ENCODE measurements at regions of chr1 and their contacts with region 1.

Region 1: DNA sequence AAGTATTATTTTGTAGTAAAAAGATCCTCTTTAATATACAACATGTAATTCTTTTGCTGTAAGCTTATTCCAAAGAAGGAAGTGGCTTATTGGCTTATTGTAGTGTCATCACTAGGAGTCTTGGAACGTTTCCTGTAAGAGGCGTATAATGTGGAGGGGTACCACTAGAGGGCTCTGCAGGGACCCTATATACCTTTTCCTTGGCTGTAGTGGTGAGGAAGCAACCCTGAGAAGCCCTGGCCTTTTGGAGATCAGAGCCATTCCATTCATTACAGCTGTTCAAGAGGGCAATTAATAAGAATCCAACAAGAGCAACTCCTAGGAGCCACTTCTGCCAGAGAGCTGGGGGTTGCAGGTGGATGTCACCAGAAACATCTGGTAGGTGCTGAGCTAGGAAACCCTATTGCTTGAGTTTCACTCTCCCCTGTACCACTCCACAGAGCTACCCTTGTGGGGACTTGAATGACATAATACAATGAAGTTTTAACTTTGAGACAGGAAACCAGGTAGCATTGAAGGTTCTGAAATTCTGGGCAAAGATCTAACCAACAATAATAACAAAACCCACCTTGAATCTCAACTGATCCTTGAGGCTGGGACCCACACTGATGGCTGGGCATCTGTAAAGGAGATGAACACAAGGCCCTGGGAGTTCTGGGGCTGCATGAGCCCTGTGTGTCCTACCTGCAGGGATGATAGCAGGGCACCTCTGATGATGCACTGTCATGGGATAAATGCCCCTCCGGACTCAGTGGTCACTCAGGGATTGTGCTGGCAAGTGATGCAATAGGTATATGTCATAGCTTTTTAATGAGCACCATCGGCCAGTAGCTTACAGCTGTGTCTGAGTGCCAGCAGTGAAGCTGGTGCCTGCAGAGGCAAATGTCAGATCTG is 160.2 kb upstream of the COA6 start:
- DNase-seq: peak; percentile 43
- ATAC-seq: peak; percentile 58
- H3K4me3 Mint-ChIP-seq: peak overlapping the region; percentile 85
- H3K27ac Mint-ChIP-seq: no peak overlapping the region
- H3K4me1 Mint-ChIP-seq: peaks cover 11% of the 10 kb centered on the region
- H3K27me3 Mint-ChIP-seq: peaks cover 15% of the 10 kb centered on the region
- CTCF ChIP-seq: peak; percentile 35; the same call in 1 of the 2 replicates

Region 2: DNA sequence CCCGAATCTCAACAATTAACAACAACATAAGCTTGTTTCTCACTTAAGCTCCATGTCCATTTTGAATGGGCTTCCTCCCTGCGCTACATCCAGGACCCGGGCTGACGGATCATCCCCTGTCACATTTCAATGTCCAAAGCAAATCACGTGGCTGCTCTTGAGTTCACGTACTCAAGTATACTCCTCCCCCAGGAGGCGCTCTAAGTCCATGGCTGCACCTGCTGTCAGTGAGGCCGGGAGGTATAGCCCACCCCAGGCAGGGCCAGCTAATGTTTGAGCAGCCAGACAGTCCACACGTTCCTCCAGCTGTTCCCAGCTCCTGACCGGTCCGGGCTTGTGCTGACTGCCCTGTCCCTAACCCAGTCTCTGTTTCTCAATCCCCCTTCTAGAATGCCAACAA is 87.7 kb before region 1 on chr1:
- CTCF ChIA-PET with region 1: interaction called, 12 read pairs
- POLR2A ChIA-PET with region 1: interaction called, 4 read pairs
- DNase-seq: peak; percentile 90
- ATAC-seq: peak; percentile 100
- H3K4me3 Mint-ChIP-seq: peak overlapping the region; percentile 10; the same call in 1 of the 2 replicates
- H3K27ac Mint-ChIP-seq: no peak overlapping the region
- H3K4me1 Mint-ChIP-seq: peaks cover 7% of the 10 kb centered on the region
- H3K27me3 Mint-ChIP-seq: peaks cover 6% of the 10 kb centered on the region
- CTCF ChIP-seq: peak; percentile 58

Region 3: GRCh38 chr1:234230414-234230862 is 17.4 kb after region 1 on chr1:
- CTCF ChIA-PET with region 1: interaction called, 33 read pairs
- POLR2A ChIA-PET with region 1: interaction called, 6 read pairs
- DNase-seq: no peak
- ATAC-seq: no peak
- H3K4me3 Mint-ChIP-seq: no peak overlapping the region
- H3K27ac Mint-ChIP-seq: no peak overlapping the region
- H3K4me1 Mint-ChIP-seq: peaks cover 43% of the 10 kb centered on the region
- H3K27me3 Mint-ChIP-seq: peaks cover 19% of the 10 kb centered on the region
- CTCF ChIP-seq: no peak